Colonic mucosa (tissue), 4 donors: ENCODE measurements at regions of chr7 and their contacts with region 1.

Region 1: DNA sequence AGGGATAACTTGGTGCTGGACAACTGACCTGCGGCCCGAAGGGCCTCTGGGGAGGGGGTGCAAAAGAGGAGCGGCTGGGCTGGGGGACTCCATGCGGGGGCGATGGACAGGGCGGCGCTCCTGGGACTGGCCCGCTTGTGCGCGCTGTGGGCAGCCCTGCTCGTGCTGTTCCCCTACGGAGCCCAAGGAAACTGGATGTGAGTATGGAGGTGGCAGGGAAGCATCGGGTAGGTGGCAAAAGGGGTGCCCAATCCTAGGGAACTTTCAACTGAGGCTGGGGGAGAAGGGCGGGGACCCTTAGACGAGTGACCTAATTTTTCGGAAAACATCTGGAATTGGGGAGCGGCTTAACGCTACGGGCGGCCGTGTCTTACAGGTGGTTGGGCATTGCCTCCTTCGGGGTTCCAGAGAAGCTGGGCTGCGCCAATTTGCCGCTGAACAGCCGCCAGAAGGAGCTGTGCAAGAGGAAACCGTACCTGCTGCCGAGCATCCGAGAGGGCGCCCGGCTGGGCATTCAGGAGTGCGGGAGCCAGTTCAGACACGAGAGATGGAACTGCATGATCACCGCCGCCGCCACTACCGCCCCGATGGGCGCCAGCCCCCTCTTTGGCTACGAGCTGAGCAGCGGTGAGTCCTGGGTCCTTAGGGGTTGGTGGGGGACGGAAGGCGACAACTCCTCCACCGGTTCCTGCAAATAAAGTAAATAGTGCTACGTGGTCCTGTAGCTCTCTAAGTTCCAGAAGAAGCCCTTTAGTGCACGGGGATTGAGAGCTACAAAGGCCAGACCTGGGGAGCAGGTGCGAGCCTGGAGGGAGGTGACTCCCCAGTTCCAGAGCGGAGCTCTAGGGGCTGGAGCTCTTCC is 622 bp downstream of the WNT16 start:
- DNase-seq: peak; percentile 34
- H3K4me3 ChIP-seq: peak overlapping the region; percentile 34
- H3K27ac ChIP-seq: no peak overlapping the region
- H3K4me1 ChIP-seq: peaks cover 13% of the 10 kb centered on the region
- H3K27me3 ChIP-seq: peaks cover 48% of the 10 kb centered on the region
- CTCF ChIP-seq: no peak

Region 2: GRCh38 chr7:121126801-121127534 is 202.5 kb before region 1 on chr7:
- intact Hi-C with region 1: loop called (anchors 10 kb)
- DNase-seq: no peak
- H3K4me3 ChIP-seq: no peak overlapping the region
- H3K27ac ChIP-seq: no peak overlapping the region
- H3K4me1 ChIP-seq: no peaks in the 10 kb centered on the region
- H3K27me3 ChIP-seq: no peaks in the 10 kb centered on the region
- CTCF ChIP-seq: no peak